PC-3 (cell line): ENCODE measurements at regions of chr20 and their contacts with region 1.

Region 1: GRCh38 chr20:39004508-39004907 is 42.4 kb downstream of the DHX35 start:
- DNase-seq: peak; percentile 16
- ATAC-seq: peak; percentile 82
- H3K4me3 ChIP-seq: no peak overlapping the region
- H3K27ac ChIP-seq: no peak overlapping the region
- H3K4me1 ChIP-seq: no peaks in the 10 kb centered on the region
- H3K27me3 ChIP-seq: no peaks in the 10 kb centered on the region
- CTCF ChIP-seq: no peak

Region 2: GRCh38 chr20:38982316-38982715 is 22.2 kb before region 1 on chr20:
- CTCF ChIA-PET with region 1: no interaction called
- POLR2A ChIA-PET with region 1: interaction called, 4 read pairs
- intact Hi-C with region 1: loop called (anchors 1 kb)
- DNase-seq: peak; percentile 69
- ATAC-seq: peak; percentile 87
- H3K4me3 ChIP-seq: no peak overlapping the region
- H3K27ac ChIP-seq: peak overlapping the region; percentile 81
- H3K4me1 ChIP-seq: peaks cover 32% of the 10 kb centered on the region
- H3K27me3 ChIP-seq: no peaks in the 10 kb centered on the region
- CTCF ChIP-seq: no peak